Activated naive CD4-positive, alpha-beta T cell treated with anti-CD3 and anti-CD28 coated beads for 36 hours (primary cell): ENCODE measurements at regions of chr5 and their contacts with region 1.

Region 1: GRCh38 chr5:135398853-135399523 is at the start of gene MACROH2A1:
- DNase-seq: peak; percentile 87
- H3K4me3 Mint-ChIP-seq: peak within 1 kb of the TSS; percentile 85
- H3K27ac Mint-ChIP-seq: peak within 1 kb of the TSS; percentile 81
- H3K4me1 Mint-ChIP-seq: peaks cover 45% of the 10 kb centered on the region
- H3K27me3 Mint-ChIP-seq: no peaks in the 10 kb centered on the region
- total RNA-seq, gene MACROH2A1: 153 TPM

Region 2: GRCh38 chr5:135376961-135377624 is 21.9 kb before region 1 on chr5:
- CTCF ChIA-PET with region 1: interaction called, 3 read pairs
- intact Hi-C with region 1: loop called (anchors 2 kb)
- DNase-seq: peak; percentile 48
- H3K4me3 Mint-ChIP-seq: no peak overlapping the region
- H3K27ac Mint-ChIP-seq: peak overlapping the region; percentile 8
- H3K4me1 Mint-ChIP-seq: peaks cover 66% of the 10 kb centered on the region
- H3K27me3 Mint-ChIP-seq: no peaks in the 10 kb centered on the region

Region 3: DNA sequence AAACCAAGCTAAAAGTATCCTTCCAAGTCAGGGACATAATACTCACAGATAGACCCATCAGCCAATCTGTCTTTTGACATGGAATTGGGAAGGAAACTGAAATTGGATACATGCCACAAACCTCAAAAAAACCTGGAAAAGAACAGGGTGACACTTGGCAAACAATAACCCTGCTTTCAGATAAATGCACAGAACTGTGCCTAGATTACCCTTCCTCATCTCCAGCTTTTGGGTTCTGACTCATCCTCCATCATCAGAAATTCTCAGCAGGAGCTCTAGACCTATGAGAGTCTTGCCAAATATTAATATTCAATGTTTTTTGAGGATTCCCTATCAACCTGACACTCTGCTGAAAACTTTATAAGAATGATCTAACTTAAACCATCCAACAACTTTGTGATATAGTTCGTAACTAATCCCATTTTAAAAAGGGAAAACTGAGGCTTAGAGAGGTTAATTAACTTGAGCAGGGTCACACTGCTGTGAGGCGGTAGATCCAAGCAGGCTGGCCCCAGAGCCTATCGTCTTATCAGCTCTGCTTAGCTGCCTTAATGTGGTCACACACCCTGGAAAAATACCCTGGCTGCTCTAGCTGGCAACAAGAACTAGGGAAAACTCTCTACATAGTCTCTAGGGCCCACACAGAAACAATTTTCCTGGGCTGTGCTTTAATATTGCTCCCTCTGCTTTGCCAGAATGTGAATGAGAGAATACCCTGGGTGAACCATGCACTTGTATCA is 1123.4 kb after region 1 on chr5:
- CTCF ChIA-PET with region 1: no interaction called
- intact Hi-C with region 1: no loop called
- DNase-seq: no peak
- H3K4me3 Mint-ChIP-seq: no peak overlapping the region
- H3K27ac Mint-ChIP-seq: no peak overlapping the region
- H3K4me1 Mint-ChIP-seq: no peaks in the 10 kb centered on the region
- H3K27me3 Mint-ChIP-seq: no peaks in the 10 kb centered on the region